ENCODE measurements at regions of chr5 and their contacts with region 1.

Region 1: GRCh38 chr5:59449905-59450644 is 443.5 kb downstream of the PDE4D start:
- DNase-seq: no peak
- ATAC-seq: no peak
- H3K4me3 ChIP-seq: no peak overlapping the region
- H3K27ac ChIP-seq: no peak overlapping the region
- H3K4me1 ChIP-seq: no peaks in the 10 kb centered on the region
- H3K27me3 ChIP-seq: no peaks in the 10 kb centered on the region
- CTCF ChIP-seq: peak in 2 of 12 donors; percentile 7 to 8
- POLR2A ChIP-seq: no peak

Region 2: GRCh38 chr5:59466271-59466670 is 16.2 kb after region 1 on chr5:
- intact Hi-C with region 1: loop called in 1 of 10 experiments (anchors 2 kb)
- DNase-seq: no peak
- ATAC-seq: no peak
- H3K4me3 ChIP-seq: no peak overlapping the region
- H3K27ac ChIP-seq: no peak overlapping the region
- H3K4me1 ChIP-seq: no peaks in the 10 kb centered on the region
- H3K27me3 ChIP-seq: no peaks in the 10 kb centered on the region
- CTCF ChIP-seq: no peak
- POLR2A ChIP-seq: no peak

Measured in heart left ventricle (tissue), 16 donors.